Activated CD8-positive, alpha-beta memory T cell treated with anti-CD3 and anti-CD28 coated beads, Interleukin-2, amount 10 ng/mL, durations not matched to agents 7 days and 5 days (primary cell): ENCODE measurements at regions of chr14 and their contacts with region 1.

Region 1: DNA sequence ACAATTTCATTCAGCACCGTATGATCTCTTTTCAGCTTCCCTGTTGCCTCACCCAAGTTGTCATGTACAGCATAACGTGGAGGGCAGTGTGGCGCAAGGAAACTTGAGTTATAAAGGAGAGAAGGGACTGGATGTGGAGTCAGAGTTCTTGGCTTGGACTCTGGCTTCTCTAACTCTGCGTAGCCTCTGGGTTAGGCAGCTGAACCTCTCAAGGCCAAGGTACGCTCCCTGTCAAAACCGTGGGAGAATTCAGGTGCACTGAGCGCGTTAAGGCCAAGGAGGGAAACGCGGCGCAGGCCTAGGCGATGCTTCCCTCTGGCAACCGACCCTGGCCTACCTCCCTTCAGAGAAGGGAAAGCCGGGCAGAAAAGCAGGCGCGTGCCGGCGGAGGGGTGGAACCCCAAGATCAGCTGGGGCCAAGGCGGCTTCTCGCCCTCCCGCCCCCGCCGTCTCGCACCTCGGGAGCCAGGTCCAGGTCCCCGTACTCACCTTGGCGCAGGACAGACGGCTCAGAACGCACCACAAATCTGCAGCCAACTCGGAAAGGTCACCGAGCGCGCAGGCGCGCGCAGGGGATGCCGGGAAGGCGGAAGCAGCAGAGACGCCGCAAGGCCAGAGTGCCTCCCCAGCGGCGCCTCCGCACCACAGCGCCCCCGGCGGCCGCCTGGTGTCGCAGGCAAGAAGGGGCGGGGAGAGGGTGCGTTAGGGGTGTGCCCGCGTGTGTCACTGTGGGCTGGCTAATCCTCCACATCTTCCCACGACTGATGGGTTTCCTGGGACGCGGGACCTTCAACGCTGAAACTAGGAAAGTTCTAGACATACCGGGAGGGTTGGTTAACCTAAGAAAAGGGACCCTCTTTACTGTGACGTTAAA is 7.0 kb upstream of the TDRD9 start:
- DNase-seq: peak; percentile 94
- ATAC-seq: peak; percentile 98
- H3K4me3 Mint-ChIP-seq: peak overlapping the region; percentile 92
- H3K27ac Mint-ChIP-seq: peak overlapping the region; percentile 85
- H3K4me1 Mint-ChIP-seq: peaks cover 12% of the 10 kb centered on the region
- H3K27me3 Mint-ChIP-seq: peaks cover 7% of the 10 kb centered on the region

Region 2: DNA sequence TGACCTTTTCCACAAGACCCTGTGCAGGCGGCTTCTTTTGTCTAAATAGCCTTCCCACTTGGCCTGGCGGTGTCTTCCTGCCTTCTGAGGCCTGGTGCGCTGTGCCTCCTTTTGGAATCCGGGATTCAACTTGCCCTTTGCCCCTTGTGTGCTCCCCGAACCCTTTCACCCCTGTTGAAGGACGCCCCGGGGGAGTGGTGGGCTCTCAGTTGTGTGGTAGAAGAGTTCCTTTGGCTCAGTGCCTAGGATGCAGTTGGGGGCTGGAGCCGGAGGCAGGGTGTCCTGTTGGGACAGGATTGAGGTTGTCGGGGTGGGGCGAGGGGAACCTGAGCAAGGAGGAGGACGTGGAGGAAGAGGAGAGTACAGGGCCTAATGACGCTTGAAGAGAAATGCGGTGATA is 257.7 kb before region 1 on chr14:
- CTCF ChIA-PET with region 1: no interaction called
- DNase-seq: no peak
- ATAC-seq: no peak
- H3K4me3 Mint-ChIP-seq: no peak overlapping the region
- H3K27ac Mint-ChIP-seq: no peak overlapping the region
- H3K4me1 Mint-ChIP-seq: no peaks in the 10 kb centered on the region
- H3K27me3 Mint-ChIP-seq: no peaks in the 10 kb centered on the region

Region 3: GRCh38 chr14:103899316-103899715 is 21.9 kb before region 1 on chr14:
- CTCF ChIA-PET with region 1: interaction called, 19 read pairs
- DNase-seq: no peak
- ATAC-seq: no peak
- H3K4me3 Mint-ChIP-seq: no peak overlapping the region
- H3K27ac Mint-ChIP-seq: no peak overlapping the region
- H3K4me1 Mint-ChIP-seq: peaks cover 2% of the 10 kb centered on the region
- H3K27me3 Mint-ChIP-seq: no peaks in the 10 kb centered on the region

Region 4: GRCh38 chr14:103904493-103905107 is 16.6 kb before region 1 on chr14:
- CTCF ChIA-PET with region 1: interaction called, 62 read pairs
- DNase-seq: no peak
- ATAC-seq: no peak
- H3K4me3 Mint-ChIP-seq: no peak overlapping the region
- H3K27ac Mint-ChIP-seq: no peak overlapping the region
- H3K4me1 Mint-ChIP-seq: peaks cover 10% of the 10 kb centered on the region
- H3K27me3 Mint-ChIP-seq: peaks cover 2% of the 10 kb centered on the region

Region 5: GRCh38 chr14:103910262-103910935 is 10.8 kb before region 1 on chr14:
- CTCF ChIA-PET with region 1: interaction called, 62 read pairs
- DNase-seq: peak; percentile 79
- ATAC-seq: peak; percentile 91
- H3K4me3 Mint-ChIP-seq: peak overlapping the region; percentile 38
- H3K27ac Mint-ChIP-seq: peak overlapping the region; percentile 63
- H3K4me1 Mint-ChIP-seq: peaks cover 17% of the 10 kb centered on the region
- H3K27me3 Mint-ChIP-seq: peaks cover 2% of the 10 kb centered on the region

Region 6: DNA sequence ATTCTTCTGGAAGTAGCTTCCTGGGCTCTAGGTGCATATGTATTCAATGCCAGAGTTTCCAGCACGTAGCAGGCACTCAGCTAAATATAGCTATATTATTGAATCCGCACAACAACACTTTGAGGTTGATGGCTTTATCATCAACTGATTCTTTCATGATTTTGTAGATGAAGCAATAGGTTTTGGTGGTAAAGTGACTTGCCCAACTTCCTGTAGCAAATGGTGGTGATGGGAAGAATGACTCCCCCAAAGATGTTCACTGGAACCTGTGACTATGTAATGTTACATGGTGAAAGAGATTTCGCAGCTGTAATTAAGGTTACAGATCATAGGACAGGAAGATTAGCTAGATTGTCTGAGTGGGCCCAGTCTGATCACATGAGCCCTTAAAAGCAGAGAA is 10.2 kb after region 1 on chr14:
- CTCF ChIA-PET with region 1: interaction called, 18 read pairs
- DNase-seq: no peak
- ATAC-seq: peak; percentile 49
- H3K4me3 Mint-ChIP-seq: no peak overlapping the region
- H3K27ac Mint-ChIP-seq: no peak overlapping the region
- H3K4me1 Mint-ChIP-seq: peaks cover 21% of the 10 kb centered on the region
- H3K27me3 Mint-ChIP-seq: no peaks in the 10 kb centered on the region